Motor neuron (in vitro differentiated cells): ENCODE measurements at regions of chr15 and their contacts with region 1.

Region 1: GRCh38 chr15:39686000-39686613 is 96.5 kb downstream of the FSIP1 start:
- ATAC-seq: peak; percentile 50 to 83 (median 70)
- H3K4me3 ChIP-seq: no peak overlapping the region
- H3K27ac ChIP-seq: no peak overlapping the region
- H3K4me1 ChIP-seq: peaks cover 0 to 7% of the 10 kb centered on the region in 2 donors

Region 2: GRCh38 chr15:38868326-38869114 is 817.6 kb before region 1 on chr15:
- in situ Hi-C with region 1: no loop called
- ATAC-seq: peak in 5 of 8 experiments; percentile 37 to 97 (median 61)
- H3K4me3 ChIP-seq: no peak overlapping the region
- H3K27ac ChIP-seq: no peak overlapping the region
- H3K4me1 ChIP-seq: no peaks in the 10 kb centered on the region

Region 3: GRCh38 chr15:39391230-39391629 is 294.9 kb before region 1 on chr15:
- in situ Hi-C with region 1: no loop called
- ATAC-seq: no peak
- H3K4me3 ChIP-seq: no peak overlapping the region
- H3K27ac ChIP-seq: no peak overlapping the region
- H3K4me1 ChIP-seq: no peaks in the 10 kb centered on the region

Region 4: GRCh38 chr15:39756806-39757522 is 70.9 kb after region 1 on chr15:
- in situ Hi-C with region 1: loop called in 1 of 9 experiments (anchors 5 kb)
- ATAC-seq: peak in 1 of 8 experiments; percentile 38
- H3K4me3 ChIP-seq: no peak overlapping the region
- H3K27ac ChIP-seq: no peak overlapping the region
- H3K4me1 ChIP-seq: no peaks in the 10 kb centered on the region